Left cardiac atrium (tissue), 4 donors: ENCODE measurements at regions of chr10 and their contacts with region 1.

Region 1: GRCh38 chr10:22436884-22437619 is 91.8 kb downstream of the SPAG6 start:
- DNase-seq: peak; percentile 94
- ATAC-seq: peak; percentile 94 to 96

Region 2: DNA sequence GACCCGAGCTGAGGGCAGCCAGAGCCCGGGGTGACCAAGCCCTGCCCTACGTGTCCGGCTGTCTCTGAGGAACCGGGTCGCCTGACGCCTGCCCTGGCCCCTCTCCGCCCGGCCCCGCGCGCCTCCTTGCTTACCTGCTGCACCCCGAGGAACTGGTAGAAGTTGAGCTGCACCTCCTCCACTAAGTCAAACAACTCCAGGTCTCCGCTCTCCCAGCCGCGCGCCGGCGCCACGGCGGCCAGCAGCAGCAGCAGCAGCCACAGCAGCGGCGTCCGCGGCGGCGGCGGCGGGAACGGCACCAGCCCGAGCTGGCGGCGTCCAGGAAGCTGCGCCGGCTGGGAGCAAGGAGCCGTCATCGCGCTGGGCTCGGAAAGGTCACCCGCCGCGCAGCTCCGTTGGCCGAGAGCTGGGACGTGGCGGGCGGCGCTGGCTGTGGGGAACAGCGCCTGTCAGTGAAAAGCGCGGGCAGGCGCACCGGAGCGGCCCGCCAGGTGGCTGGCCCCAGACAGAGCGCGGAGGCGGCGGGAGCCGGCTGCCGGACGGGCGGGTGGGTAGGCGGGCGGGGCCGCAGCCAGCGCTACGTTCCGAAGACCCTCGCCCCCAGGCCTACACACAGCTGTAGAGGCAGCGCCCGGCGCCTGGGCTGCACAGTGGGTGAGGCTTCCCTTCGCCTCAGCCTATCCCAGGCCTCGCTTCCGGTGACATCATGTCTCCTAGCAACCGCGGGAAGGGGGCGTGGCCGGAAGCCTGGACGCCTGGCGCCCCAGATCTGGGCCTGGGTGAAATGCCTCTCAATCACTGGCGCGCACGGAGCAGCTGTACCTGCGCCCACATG is 433.8 kb before region 1 on chr10 and contains the start of gene DNAJC1:
- intact Hi-C with region 1: loop called in 1 of 2 experiments (anchors 5 kb)
- DNase-seq: peak; percentile 98
- ATAC-seq: peak; percentile 99 to 100
- total RNA-seq, gene DNAJC1: 16.1 to 20.8 TPM

Region 3: DNA sequence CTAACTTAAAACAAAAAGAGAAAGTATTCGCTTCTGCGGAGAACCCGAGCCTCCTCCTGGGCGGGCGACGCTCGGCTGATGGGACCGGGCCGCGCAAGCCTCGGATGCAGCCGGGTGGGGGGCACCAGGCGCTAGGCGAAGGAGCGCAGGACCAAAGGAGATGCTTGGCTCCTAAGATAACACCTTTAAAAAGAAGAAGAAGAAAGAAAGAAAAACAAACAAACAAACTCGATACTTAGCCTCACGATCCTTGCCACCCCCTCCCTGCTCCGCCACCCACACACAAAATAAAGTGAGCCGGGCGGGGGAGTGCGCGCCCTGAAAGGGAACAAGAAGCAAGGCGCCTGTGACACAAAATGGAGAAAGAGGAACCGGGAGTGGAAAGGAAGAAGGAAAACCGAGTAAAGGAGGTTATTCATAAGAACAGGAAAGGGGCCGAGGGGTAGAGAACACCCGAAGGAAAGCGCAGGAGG is 185.3 kb before region 1 on chr10:
- intact Hi-C with region 1: loop called in 1 of 2 experiments (anchors 10 kb)
- DNase-seq: peak; percentile 77
- ATAC-seq: peak; percentile 58 to 63

Region 4: DNA sequence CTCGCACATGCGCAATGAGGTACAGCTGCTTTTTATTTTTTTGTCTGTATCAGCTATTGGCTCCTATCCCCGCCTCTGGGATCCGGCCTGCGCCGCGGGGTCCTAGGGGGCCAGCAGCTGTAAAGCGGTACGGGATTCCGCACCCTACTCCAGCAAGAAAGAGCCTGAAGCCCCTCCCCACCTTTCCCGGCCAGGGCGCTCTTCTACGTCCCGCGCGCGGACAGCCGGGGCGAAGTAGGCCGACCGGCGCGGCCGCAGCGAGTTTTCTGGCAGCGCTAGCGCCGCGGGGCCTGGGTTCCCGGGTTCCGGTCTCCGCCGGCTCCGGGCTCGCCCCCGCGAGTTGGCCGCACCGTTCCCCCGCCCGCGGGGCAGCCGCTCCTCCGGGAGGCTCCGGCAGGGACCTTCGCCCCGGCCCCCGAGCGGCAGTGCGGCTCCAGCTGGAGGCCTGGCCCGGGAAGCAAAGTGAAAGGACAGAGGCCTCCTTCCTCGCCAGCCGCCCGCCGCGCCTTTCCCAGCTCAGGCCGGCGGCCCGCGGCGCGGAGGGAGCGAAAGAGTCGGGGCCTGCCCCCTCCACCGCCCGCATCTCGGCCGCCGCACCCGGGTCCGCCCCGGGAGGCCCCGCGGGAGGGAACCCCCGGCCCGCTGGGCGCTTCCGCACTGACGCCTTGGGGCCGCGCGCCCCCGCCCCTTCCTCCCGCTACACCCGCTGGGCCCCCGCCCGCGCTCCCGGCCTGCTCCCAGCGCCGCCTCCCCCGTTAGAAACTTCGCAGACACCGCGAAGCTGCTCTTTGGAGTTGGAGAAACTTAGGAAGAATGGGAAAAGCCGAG is 96.5 kb before region 1 on chr10:
- intact Hi-C with region 1: loop called in 1 of 2 experiments (anchors 10 kb)
- DNase-seq: peak; percentile 79
- ATAC-seq: peak; percentile 83 to 90

Region 5: GRCh38 chr10:22550732-22551131 is 113.7 kb after region 1 on chr10:
- intact Hi-C with region 1: loop called in 1 of 2 experiments (anchors 10 kb)
- DNase-seq: peak; percentile 52
- ATAC-seq: no peak